A673 (cell line): ENCODE measurements at regions of chrX and their contacts with region 1.

Region 1: GRCh38 chrX:129606918-129607317 is 47.8 kb downstream of the APLN start:
- DNase-seq: peak; percentile 79
- H3K4me3 ChIP-seq: no peak overlapping the region
- H3K27ac ChIP-seq: peak overlapping the region; percentile 55
- H3K4me1 ChIP-seq: peaks cover 5% of the 10 kb centered on the region
- H3K27me3 ChIP-seq: no peaks in the 10 kb centered on the region
- CTCF ChIP-seq: peak; percentile 78

Region 2: GRCh38 chrX:129565046-129565650 is 41.8 kb before region 1 on chrX:
- CTCF ChIA-PET with region 1: no interaction called
- POLR2A ChIA-PET with region 1: no interaction called
- intact Hi-C with region 1: no loop called
- DNase-seq: no peak
- H3K4me3 ChIP-seq: no peak overlapping the region
- H3K27ac ChIP-seq: no peak overlapping the region
- H3K4me1 ChIP-seq: no peaks in the 10 kb centered on the region
- H3K27me3 ChIP-seq: no peaks in the 10 kb centered on the region
- CTCF ChIP-seq: no peak

Region 3: DNA sequence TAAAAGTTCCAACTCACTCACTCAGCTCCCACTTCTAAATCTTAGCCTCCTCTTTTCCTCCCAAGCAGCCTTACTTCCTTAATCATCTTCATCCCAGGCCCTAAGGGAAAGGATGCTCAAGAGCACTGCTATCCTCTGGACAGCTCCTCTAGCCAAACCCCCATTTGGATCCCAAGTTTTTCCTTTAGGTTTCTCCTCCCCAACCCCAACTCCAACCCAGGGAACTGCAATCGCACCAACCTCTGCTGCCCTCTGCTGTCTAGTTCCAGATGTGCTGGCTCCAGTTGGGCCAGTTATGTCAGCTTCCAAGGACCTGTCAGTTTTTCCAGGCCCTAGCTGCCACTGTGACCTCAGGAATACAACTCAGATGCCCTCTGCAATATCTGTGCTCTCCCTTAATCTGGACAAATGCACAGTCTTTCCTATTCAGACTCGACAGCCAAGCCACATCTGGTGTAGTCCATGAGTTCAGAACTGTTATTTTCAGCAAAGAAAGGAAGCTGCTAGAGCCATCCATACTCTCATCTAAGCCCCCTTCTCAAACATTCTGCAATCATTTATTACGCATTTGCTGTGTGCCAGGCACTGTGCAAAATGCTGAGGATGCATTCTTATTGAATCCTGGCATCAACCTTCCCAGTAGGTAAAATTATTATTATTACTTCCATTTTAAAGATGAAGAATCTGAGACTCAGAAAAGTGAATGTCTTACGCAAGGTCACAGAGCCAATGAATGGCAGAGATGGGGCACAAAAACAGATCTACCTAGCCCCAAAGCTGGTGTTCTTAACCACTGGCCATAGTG is 119.6 kb after region 1 on chrX:
- CTCF ChIA-PET with region 1: interaction called, 6 read pairs
- POLR2A ChIA-PET with region 1: no interaction called
- intact Hi-C with region 1: loop called (anchors 2 kb)
- DNase-seq: peak; percentile 59
- H3K4me3 ChIP-seq: no peak overlapping the region
- H3K27ac ChIP-seq: no peak overlapping the region
- H3K4me1 ChIP-seq: no peaks in the 10 kb centered on the region
- H3K27me3 ChIP-seq: no peaks in the 10 kb centered on the region
- CTCF ChIP-seq: peak; percentile 70

Region 4: GRCh38 chrX:129823115-129823514 is 216.2 kb after region 1 on chrX:
- CTCF ChIA-PET with region 1: no interaction called
- POLR2A ChIA-PET with region 1: no interaction called
- intact Hi-C with region 1: loop called (anchors 1 kb)
- DNase-seq: peak; percentile 66
- H3K4me3 ChIP-seq: no peak overlapping the region
- H3K27ac ChIP-seq: no peak overlapping the region
- H3K4me1 ChIP-seq: no peaks in the 10 kb centered on the region
- H3K27me3 ChIP-seq: no peaks in the 10 kb centered on the region
- CTCF ChIP-seq: peak; percentile 69

Region 5: DNA sequence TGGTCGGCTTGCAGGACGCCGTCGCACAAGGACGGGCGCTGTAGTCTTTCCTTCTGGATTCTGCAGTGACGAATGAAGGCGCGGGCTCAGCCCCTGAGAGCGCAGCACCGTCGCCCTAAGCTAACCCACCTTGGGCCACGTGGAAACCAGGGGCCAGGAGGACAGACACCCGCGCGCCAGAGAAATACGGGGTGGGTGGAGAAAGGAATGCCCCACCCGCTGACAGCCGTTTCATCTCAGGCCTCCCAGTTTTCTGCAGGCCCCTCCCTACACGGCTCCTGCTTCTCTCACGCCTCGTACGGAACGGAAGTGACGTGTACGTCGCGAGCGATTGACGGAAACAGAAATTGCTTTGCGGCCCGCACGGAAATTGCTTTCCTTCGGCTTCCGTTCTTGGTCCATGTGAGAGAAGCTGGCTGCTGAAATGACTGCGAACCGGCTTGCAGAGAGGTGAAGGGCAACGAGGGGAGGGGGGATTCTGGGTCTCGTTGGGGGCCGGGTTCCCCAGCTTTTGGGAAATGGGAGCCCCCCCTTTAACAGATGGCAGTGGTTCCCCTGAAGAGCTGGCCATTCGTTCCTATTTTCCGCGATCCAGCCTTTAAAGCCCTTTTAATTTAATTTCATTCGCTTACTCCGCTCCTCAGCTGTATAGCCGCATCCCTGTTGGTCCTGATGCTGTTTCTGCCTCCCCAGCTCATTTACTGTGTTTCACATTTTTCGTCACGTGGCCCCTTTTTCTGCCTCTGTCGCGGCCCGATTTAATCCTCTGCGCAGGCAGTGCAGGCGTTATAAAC is 299.1 kb after region 1 on chrX and contains the start of gene UTP14A:
- CTCF ChIA-PET with region 1: no interaction called
- POLR2A ChIA-PET with region 1: no interaction called
- intact Hi-C with region 1: loop called (anchors 5 kb)
- DNase-seq: peak; percentile 94
- H3K4me3 ChIP-seq: peak within 1 kb of the TSS; percentile 74
- H3K27ac ChIP-seq: peak within 1 kb of the TSS; percentile 82
- H3K4me1 ChIP-seq: peaks cover 6% of the 10 kb centered on the region
- H3K27me3 ChIP-seq: no peaks in the 10 kb centered on the region
- CTCF ChIP-seq: no peak
- total RNA-seq, gene UTP14A: 35.6 and 46.3 TPM in 2 replicates

Region 6: DNA sequence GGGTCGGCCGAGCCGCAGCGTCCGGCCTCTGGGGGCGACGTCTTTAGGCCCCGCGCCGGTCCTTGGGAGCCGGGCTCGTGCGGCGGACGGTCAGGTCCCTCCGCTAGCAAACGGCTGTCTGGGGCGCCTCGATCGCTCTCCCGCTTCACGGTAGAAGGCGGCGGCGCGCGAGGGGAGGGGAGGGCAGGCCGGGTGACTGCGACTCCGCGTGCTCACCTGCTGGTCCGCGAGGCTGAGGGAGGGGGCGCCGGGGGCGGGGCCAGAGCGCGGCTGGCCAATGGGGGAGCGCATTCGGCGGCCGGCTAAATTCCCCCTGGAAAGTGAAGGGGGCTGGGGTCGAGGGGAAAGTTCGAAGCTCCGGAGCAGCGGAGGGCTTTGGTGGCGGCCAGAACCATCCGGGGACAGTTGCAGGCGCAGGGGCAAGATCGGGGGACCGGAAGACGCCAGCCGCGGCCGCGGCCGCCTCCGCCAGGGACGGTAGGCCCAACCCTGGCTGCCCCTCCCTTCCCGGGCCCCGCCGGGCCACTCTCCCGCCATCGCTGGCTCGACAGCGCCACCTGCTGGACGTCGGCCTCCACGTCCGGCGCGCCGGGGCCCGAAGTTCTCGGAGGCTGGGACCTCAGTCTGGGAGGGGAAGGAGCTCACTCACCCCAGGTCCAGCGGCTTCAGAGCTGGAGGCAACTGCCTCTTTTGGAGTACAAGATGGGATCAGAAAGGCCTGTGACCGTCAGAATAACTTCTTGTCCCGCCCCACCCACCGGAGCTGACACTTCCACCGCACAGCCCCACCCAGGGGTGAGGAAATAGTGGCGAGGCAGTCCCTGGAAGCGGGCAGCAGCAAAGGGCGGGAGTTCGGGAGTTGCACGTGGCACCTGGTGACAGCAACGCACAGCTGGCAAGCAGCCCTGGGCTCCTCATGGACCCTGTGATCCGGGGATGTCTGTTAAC is 453.5 kb after region 1 on chrX:
- CTCF ChIA-PET with region 1: no interaction called
- POLR2A ChIA-PET with region 1: no interaction called
- intact Hi-C with region 1: loop called (anchors 2 kb)
- DNase-seq: peak; percentile 81
- H3K4me3 ChIP-seq: peak overlapping the region; percentile 46
- H3K27ac ChIP-seq: peak overlapping the region; percentile 54
- H3K4me1 ChIP-seq: peaks cover 4% of the 10 kb centered on the region
- H3K27me3 ChIP-seq: no peaks in the 10 kb centered on the region
- CTCF ChIP-seq: peak; percentile 79

Region 7: GRCh38 chrX:130196466-130196865 is 589.5 kb after region 1 on chrX:
- CTCF ChIA-PET with region 1: no interaction called
- POLR2A ChIA-PET with region 1: no interaction called
- intact Hi-C with region 1: loop called (anchors 10 kb)
- DNase-seq: no peak
- H3K4me3 ChIP-seq: no peak overlapping the region
- H3K27ac ChIP-seq: no peak overlapping the region
- H3K4me1 ChIP-seq: no peaks in the 10 kb centered on the region
- H3K27me3 ChIP-seq: no peaks in the 10 kb centered on the region
- CTCF ChIP-seq: no peak

Region 8: GRCh38 chrX:130916636-130917422 is 1309.9 kb after region 1 on chrX:
- CTCF ChIA-PET with region 1: no interaction called
- POLR2A ChIA-PET with region 1: no interaction called
- intact Hi-C with region 1: loop called (anchors 5 kb)
- DNase-seq: peak; percentile 74
- H3K4me3 ChIP-seq: no peak overlapping the region
- H3K27ac ChIP-seq: no peak overlapping the region
- H3K4me1 ChIP-seq: no peaks in the 10 kb centered on the region
- H3K27me3 ChIP-seq: no peaks in the 10 kb centered on the region
- CTCF ChIP-seq: peak; percentile 81